ENCODE measurements at regions of chr6 and their contacts with region 1.

Region 1: GRCh38 chr6:118893807-118894424 is at the start of gene ASF1A:
- DNase-seq: peak; percentile 98
- H3K4me3 Mint-ChIP-seq: peak within 1 kb of the TSS; percentile 88
- H3K27ac Mint-ChIP-seq: peak within 1 kb of the TSS; percentile 98
- H3K4me1 Mint-ChIP-seq: peaks cover 51% of the 10 kb centered on the region
- H3K27me3 Mint-ChIP-seq: peaks cover 1% of the 10 kb centered on the region
- total RNA-seq, gene ASF1A: 32.5 to 32.7 TPM

Region 2: DNA sequence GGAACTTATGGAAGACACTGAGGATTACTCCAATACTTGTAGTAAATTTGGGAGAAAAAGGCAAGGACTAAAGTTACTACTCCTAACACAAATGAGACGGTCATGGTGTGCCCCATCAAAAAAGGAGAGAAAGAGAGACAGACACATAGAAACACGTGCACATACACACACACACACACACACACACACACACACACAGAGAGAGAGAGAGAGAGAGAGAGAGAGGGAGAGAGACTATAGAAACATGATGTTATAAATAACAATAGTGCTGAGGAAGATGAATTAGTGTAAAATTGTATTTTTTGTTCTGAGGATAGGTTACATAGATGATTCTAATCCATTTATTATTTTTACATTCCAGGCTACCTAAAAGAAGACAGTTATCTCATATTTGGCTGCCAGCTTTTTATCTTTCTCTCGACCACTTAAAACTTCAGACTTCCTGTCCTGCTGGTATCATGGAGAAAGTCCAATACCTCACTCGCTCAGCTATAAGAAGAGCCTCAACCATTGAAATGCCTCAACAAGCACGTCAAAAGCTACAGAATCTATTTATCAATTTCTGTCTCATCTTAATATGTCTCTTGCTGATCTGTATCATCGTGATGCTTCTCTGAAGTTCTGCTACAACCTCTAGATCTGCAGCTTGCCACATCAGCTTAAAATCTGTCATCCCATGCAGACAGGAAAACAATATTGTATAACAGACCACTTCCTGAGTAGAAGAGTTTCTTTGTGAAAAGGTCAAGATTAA is 335.3 kb before region 1 on chr6:
- CTCF ChIA-PET with region 1: no interaction called
- POLR2A ChIA-PET with region 1: no interaction called
- intact Hi-C with region 1: loop called (anchors 2 kb)
- DNase-seq: peak; percentile 22
- H3K4me3 Mint-ChIP-seq: peak overlapping the region; percentile 35
- H3K27ac Mint-ChIP-seq: peak overlapping the region; percentile 85
- H3K4me1 Mint-ChIP-seq: peaks cover 32% of the 10 kb centered on the region
- H3K27me3 Mint-ChIP-seq: no peaks in the 10 kb centered on the region

Region 3: DNA sequence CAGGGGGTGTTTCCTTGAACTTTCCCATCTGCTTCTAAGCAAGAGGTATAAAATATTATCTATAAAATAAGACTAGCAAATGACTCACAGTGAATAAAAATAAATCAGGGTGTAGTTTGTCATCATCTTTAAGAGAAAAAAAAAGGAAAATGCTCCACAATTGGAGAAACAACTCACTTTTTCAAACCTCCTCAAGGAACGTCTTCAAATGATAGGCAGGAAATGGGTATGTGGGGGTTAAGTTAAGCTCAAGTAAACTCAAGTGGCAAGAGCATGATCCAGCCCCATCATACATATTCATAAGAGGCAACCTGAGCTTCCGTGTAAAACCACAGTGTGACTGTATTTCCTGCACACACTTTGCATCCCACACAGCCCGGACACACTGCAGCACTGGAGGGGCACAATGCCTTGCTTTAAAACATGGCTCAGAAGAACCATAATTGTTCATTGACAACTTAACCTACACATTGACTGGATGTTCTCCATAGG is 184.0 kb before region 1 on chr6:
- CTCF ChIA-PET with region 1: interaction called, 4 read pairs
- POLR2A ChIA-PET with region 1: interaction called, 9 read pairs
- intact Hi-C with region 1: loop called (anchors 1 kb)
- DNase-seq: peak; percentile 88
- H3K4me3 Mint-ChIP-seq: peak overlapping the region; percentile 95
- H3K27ac Mint-ChIP-seq: peak overlapping the region; percentile 98
- H3K4me1 Mint-ChIP-seq: peaks cover 72% of the 10 kb centered on the region
- H3K27me3 Mint-ChIP-seq: no peaks in the 10 kb centered on the region

Region 4: GRCh38 chr6:118843685-118844390 is 50.1 kb before region 1 on chr6:
- CTCF ChIA-PET with region 1: interaction called, 10 read pairs
- POLR2A ChIA-PET with region 1: interaction called, 8 read pairs
- intact Hi-C with region 1: loop called (anchors 1 kb)
- DNase-seq: no peak
- H3K4me3 Mint-ChIP-seq: peak overlapping the region; percentile 33
- H3K27ac Mint-ChIP-seq: peak overlapping the region; percentile 34
- H3K4me1 Mint-ChIP-seq: peaks cover 32% of the 10 kb centered on the region
- H3K27me3 Mint-ChIP-seq: no peaks in the 10 kb centered on the region

Region 5: DNA sequence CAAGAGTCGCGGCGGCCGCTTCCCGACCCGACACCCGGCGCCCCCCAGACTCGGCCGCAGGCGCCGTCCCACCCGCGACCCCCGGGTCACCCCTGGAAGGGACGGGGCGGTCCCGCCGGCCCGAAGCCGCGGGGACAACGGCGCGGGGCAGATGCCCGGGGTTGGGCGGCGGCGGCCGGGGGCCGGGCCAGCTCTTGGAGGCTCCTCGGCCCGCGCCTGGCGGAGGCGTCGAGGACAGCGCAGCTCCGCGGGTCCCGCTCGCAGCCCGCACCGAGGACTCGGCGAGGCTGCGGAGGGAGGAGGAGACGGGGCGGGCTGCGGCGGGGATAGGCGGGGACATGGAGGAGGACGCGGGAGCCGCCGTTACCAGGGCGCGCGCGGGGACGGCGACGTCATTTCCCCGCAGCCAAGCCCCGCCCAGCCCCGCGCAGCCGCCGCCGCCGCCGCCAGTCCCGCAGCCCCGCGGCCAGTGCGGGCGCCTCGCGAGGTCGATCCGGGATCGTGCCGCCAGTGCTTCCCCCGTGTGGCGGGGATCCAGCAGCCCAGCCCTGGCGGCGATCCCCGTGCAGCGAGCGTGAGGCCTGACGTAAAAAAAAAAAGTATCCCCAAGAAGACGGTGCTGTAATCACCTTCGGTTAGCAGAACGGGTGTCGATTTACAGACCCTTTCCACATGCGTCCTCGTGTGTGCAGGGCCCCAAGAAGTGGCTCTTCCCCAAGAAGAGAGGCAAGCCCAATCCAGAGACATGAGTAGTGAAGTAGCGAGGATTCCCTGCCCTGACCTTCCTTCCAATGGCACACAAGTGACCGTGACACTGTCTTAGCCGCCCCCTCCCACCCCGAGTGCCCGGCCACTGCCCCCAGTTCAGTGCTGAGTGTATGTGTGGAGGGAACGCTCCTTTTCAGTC is 184.7 kb after region 1 on chr6 and contains the start of gene FAM184A:
- CTCF ChIA-PET with region 1: interaction called, 5 read pairs
- POLR2A ChIA-PET with region 1: interaction called, 5 read pairs
- intact Hi-C with region 1: loop called (anchors 1 kb)
- DNase-seq: peak; percentile 77
- H3K4me3 Mint-ChIP-seq: peak within 1 kb of the TSS; percentile 88
- H3K27ac Mint-ChIP-seq: peak within 1 kb of the TSS; percentile 90
- H3K4me1 Mint-ChIP-seq: peaks cover 46% of the 10 kb centered on the region
- H3K27me3 Mint-ChIP-seq: no peaks in the 10 kb centered on the region
- total RNA-seq, gene FAM184A: 7.6 to 10.8 TPM

Region 6: GRCh38 chr6:119349323-119350042 is 455.6 kb after region 1 on chr6 and contains the start of gene MAN1A1:
- CTCF ChIA-PET with region 1: no interaction called
- POLR2A ChIA-PET with region 1: no interaction called
- intact Hi-C with region 1: loop called (anchors 1 kb)
- DNase-seq: peak; percentile 92
- H3K4me3 Mint-ChIP-seq: peak within 1 kb of the TSS; percentile 94
- H3K27ac Mint-ChIP-seq: peak within 1 kb of the TSS; percentile 93
- H3K4me1 Mint-ChIP-seq: peaks cover 43% of the 10 kb centered on the region
- H3K27me3 Mint-ChIP-seq: no peaks in the 10 kb centered on the region
- total RNA-seq, gene MAN1A1: 21.8 to 23.9 TPM